ENCODE measurements at regions of chr12 and their contacts with region 1.

Region 1: GRCh38 chr12:57462251-57462911 is 2.8 kb downstream of the GLI1 start:
- DNase-seq: peak; percentile 82 to 94 (median 86)
- ATAC-seq: peak; percentile 71
- H3K4me3 ChIP-seq: peak overlapping the region; percentile 52
- H3K4me3 Mint-ChIP-seq: peak overlapping the region; percentile 94
- H3K27ac ChIP-seq: no peak overlapping the region
- H3K27ac Mint-ChIP-seq: peak overlapping the region; percentile 62
- H3K4me1 ChIP-seq: peaks cover 52% of the 10 kb centered on the region
- H3K4me1 Mint-ChIP-seq: peaks cover 55% of the 10 kb centered on the region
- H3K27me3 ChIP-seq: peaks cover 9 to 14% of the 10 kb centered on the region in 2 experiments
- H3K27me3 Mint-ChIP-seq: peaks cover 26% of the 10 kb centered on the region
- CTCF ChIP-seq: peak; percentile 92

Region 2: GRCh38 chr12:57268264-57268663 is 194.1 kb before region 1 on chr12:
- CTCF ChIA-PET with region 1: no interaction called
- POLR2A ChIA-PET with region 1: no interaction called
- intact Hi-C with region 1: loop called in 1 of 2 experiments (anchors 10 kb)
- DNase-seq: no peak
- ATAC-seq: no peak
- H3K4me3 ChIP-seq: no peak overlapping the region
- H3K4me3 Mint-ChIP-seq: no peak overlapping the region
- H3K27ac ChIP-seq: peak overlapping the region in 1 of 2 donors; percentile 7
- H3K27ac Mint-ChIP-seq: no peak overlapping the region
- H3K4me1 ChIP-seq: peaks cover 3% of the 10 kb centered on the region
- H3K4me1 Mint-ChIP-seq: no peaks in the 10 kb centered on the region
- H3K27me3 ChIP-seq: no peaks in the 10 kb centered on the region
- H3K27me3 Mint-ChIP-seq: no peaks in the 10 kb centered on the region
- CTCF ChIP-seq: no peak

Region 3: GRCh38 chr12:57404966-57405640 is 57.3 kb before region 1 on chr12:
- CTCF ChIA-PET with region 1: no interaction called
- POLR2A ChIA-PET with region 1: no interaction called
- intact Hi-C with region 1: no loop called
- DNase-seq: no peak
- ATAC-seq: no peak
- H3K4me3 ChIP-seq: no peak overlapping the region
- H3K4me3 Mint-ChIP-seq: no peak overlapping the region
- H3K27ac ChIP-seq: no peak overlapping the region
- H3K27ac Mint-ChIP-seq: no peak overlapping the region
- H3K4me1 ChIP-seq: no peaks in the 10 kb centered on the region
- H3K4me1 Mint-ChIP-seq: peaks cover 20% of the 10 kb centered on the region
- H3K27me3 ChIP-seq: no peaks in the 10 kb centered on the region
- H3K27me3 Mint-ChIP-seq: no peaks in the 10 kb centered on the region
- CTCF ChIP-seq: no peak

Region 4: DNA sequence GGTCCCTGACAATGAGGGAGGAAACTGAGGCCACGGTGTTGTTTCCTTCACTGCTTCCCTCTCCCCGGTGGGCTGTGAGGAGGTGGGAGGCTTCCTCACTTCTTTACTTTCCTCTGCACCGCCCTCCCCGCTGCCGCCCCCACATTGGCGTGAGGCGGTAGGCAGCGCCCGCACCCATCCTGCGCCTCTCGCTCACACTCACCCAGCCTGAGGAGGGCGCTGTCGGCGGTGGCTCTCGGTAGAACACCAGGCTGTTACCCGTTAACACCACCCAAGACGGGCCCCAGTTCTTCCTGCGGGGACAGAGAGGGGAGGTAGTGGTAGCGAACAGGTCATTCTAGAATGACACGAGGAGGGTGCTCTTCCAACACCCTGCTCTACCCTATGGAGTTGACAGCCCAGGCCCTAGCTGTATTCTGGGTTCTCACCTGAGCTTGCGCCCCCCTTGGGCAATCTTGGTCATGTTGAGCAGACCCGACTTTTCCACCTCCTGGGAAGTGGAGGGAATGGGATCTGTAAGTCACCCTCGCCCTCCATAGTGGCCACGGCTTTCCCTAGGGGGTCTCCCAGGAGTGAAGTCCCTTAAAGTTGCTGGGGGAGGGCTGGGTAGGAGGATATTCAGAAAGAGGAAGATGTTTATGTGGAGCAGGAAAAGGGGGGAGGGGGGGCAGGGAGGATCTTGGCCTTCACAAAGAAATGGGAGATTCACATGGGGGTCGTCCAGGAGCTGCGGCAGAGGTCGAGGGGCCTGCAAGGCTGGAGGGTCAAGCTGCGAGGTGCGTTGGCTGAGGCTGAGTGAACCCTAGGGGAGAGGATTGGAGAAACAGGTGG is 14.0 kb after region 1 on chr12:
- CTCF ChIA-PET with region 1: interaction called, 35 read pairs
- POLR2A ChIA-PET with region 1: interaction called, 93 read pairs
- intact Hi-C with region 1: loop called (anchors 2 kb)
- DNase-seq: peak; percentile 52 to 84 (median 64)
- ATAC-seq: peak; percentile 31
- H3K4me3 ChIP-seq: peak overlapping the region; percentile 90
- H3K4me3 Mint-ChIP-seq: peak overlapping the region; percentile 93
- H3K27ac ChIP-seq: peak overlapping the region; percentile 99
- H3K27ac Mint-ChIP-seq: peak overlapping the region; percentile 99
- H3K4me1 ChIP-seq: peaks cover 84% of the 10 kb centered on the region
- H3K4me1 Mint-ChIP-seq: peaks cover 89% of the 10 kb centered on the region
- H3K27me3 ChIP-seq: no peaks in the 10 kb centered on the region
- H3K27me3 Mint-ChIP-seq: no peaks in the 10 kb centered on the region
- CTCF ChIP-seq: peak; percentile 63

Region 5: GRCh38 chr12:57546438-57547383 is 84.3 kb after region 1 on chr12 and contains the start of gene DCTN2:
- CTCF ChIA-PET with region 1: interaction called, 6 read pairs
- POLR2A ChIA-PET with region 1: interaction called, 4 read pairs
- intact Hi-C with region 1: loop called in 1 of 2 experiments (anchors 2 kb)
- DNase-seq: peak; percentile 81 to 97 (median 88)
- ATAC-seq: peak; percentile 95
- H3K4me3 ChIP-seq: peak within 1 kb of the TSS; percentile 74
- H3K4me3 Mint-ChIP-seq: peak within 1 kb of the TSS; percentile 100
- H3K27ac ChIP-seq: peak within 1 kb of the TSS; percentile 63 to 77
- H3K27ac Mint-ChIP-seq: peak within 1 kb of the TSS; percentile 86
- H3K4me1 ChIP-seq: peaks cover 35% of the 10 kb centered on the region
- H3K4me1 Mint-ChIP-seq: peaks cover 51% of the 10 kb centered on the region
- H3K27me3 ChIP-seq: peaks cover 4 to 8% of the 10 kb centered on the region in 2 experiments
- H3K27me3 Mint-ChIP-seq: peaks cover 4% of the 10 kb centered on the region
- CTCF ChIP-seq: no peak
- total RNA-seq, gene DCTN2: 39.6 TPM

Region 6: DNA sequence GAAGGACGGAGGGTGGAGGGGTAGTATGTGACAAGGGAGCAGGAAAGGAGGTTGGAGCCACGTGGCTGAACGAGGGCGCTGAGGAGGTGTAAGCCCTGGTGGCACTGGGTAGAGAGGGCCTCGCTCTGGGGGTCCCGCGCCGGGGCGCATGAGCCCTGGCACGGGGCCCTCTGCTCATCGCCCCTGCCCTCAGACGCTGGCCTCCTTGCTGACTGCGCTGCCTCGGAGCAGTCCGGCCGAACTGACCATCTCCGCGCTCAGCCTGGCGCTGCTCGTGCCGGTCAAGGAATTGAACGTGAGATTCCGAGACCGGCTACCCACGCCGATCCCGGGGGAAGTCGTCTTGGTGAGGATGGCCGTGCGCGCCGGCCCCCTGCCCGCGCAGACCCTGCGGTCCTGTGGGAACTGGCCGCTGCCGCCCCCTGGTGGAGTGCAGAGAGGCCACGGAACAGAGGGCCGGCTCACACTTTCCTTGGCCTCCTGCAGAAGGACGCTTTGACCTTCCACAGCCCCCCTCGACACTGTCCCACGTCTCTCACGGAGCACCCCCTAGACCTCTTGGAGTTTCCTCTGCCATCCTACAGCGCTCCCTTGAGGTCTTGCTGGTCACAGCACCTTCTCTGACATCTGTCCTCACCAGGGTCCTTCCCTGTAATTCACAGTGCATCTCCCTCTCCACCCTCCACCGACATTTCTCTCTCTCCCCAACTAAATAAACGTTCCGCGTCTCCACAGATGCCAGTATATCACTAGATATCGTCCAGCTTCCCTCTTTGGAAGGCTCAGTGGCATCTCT is 159.3 kb after region 1 on chr12:
- CTCF ChIA-PET with region 1: interaction called, 5 read pairs
- POLR2A ChIA-PET with region 1: interaction called, 3 read pairs
- intact Hi-C with region 1: loop called (anchors 1 to 2 kb)
- DNase-seq: peak; percentile 33 to 77 (median 50)
- ATAC-seq: peak; percentile 66
- H3K4me3 ChIP-seq: peak overlapping the region; percentile 40
- H3K4me3 Mint-ChIP-seq: peak overlapping the region; percentile 80
- H3K27ac ChIP-seq: no peak overlapping the region
- H3K27ac Mint-ChIP-seq: no peak overlapping the region
- H3K4me1 ChIP-seq: peaks cover 33% of the 10 kb centered on the region
- H3K4me1 Mint-ChIP-seq: peaks cover 34% of the 10 kb centered on the region
- H3K27me3 ChIP-seq: peaks cover 89 to 93% of the 10 kb centered on the region in 2 experiments
- H3K27me3 Mint-ChIP-seq: peaks cover 100% of the 10 kb centered on the region
- CTCF ChIP-seq: peak; percentile 96

Region 7: DNA sequence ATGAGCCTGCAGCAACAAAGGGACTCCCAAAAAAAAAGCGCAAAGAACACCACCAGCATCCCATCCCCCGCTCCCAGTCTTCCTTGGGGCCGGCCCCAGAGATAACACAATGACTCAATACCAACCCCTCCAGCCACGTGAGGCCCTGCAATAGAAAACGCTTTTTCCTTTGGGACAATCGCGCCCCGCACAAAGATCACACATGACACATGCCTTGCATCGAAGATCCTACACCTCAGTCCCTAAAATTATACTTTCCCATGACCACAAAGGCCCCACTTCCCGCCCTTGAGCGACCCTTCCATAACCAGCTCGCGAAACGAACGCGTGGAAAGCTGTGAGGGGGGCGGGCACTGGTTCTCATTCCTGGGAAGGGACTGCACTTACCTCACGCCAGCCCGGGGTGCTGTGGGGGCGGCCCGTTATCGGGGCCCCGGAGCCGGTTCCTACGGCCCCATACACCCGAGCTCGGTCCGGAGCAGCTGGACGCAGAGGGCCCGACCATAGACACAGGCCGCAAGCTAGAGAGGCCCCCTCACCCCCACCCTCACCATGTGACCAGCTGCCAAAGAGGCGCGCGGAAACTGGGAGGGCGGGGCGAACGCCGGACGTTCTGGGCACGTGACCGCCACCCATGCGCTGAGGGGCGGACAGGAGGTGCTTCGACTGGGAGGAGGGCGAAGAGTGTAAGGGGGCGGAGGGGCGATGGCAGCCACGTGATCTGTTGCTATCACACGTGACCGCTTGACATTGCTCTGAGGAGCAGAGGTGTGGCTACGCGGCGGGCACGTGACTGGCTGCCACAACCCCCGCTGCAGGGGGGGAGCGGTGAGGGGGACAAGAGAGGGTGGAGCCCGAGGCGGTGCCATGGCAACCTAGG is 289.6 kb after region 1 on chr12 and contains the start of gene CDK4:
- CTCF ChIA-PET with region 1: no interaction called
- POLR2A ChIA-PET with region 1: no interaction called
- intact Hi-C with region 1: no loop called
- DNase-seq: peak; percentile 97 to 100 (median 98)
- ATAC-seq: peak; percentile 75
- H3K4me3 ChIP-seq: peak within 1 kb of the TSS; percentile 66
- H3K4me3 Mint-ChIP-seq: peak within 1 kb of the TSS; percentile 89
- H3K27ac ChIP-seq: peak within 1 kb of the TSS; percentile 74 to 86
- H3K27ac Mint-ChIP-seq: peak within 1 kb of the TSS; percentile 87
- H3K4me1 ChIP-seq: peaks cover 54% of the 10 kb centered on the region
- H3K4me1 Mint-ChIP-seq: peaks cover 62% of the 10 kb centered on the region
- H3K27me3 ChIP-seq: no peaks in the 10 kb centered on the region
- H3K27me3 Mint-ChIP-seq: no peaks in the 10 kb centered on the region
- CTCF ChIP-seq: no peak
- total RNA-seq, gene CDK4: 8.7 to 10.8 TPM